CD4-positive, alpha-beta memory T cell (primary cell): ENCODE measurements at regions of chr19 and their contacts with region 1.

Region 1: DNA sequence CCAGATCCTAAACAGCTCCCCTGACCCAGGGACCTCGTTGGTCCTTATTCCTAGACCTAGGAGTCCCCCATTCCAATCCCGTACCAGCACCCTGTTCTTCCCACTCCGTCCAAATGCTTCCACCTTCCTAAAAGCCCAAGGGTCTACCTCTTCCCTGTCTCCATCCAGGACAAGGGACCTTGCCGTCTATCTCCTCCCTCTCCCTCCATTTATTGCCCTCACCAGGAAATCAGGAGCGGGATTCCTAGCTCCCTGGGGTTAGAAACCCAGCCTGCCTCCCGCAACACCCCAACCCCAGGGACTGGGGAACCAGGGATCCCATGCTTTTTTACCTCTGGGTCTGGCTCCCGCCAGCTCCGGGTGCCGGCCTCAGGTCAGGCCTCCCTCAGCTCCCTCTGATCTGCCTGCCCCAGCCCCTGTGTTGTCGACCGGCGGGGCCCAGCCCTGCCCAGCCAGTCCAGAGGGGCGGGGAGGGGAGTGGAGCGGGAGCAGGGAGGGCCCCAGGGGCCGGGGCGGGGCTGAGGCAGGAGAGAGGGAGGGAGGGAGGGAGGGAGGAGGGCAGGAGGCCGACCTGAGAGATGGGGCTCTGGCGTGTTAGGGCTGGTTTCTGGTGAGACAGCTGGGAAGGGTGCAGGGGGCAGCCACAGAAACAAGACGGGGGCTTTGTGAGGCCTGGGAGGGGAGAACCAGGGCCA is at the start of gene B3GNT8:
- DNase-seq: peak; percentile 16 to 52 (median 32)
- H3K4me3 ChIP-seq: peak within 1 kb of the TSS; percentile 33 to 34
- H3K4me3 Mint-ChIP-seq: peak within 1 kb of the TSS; percentile 90 to 98 (median 92)
- H3K27ac ChIP-seq: peak within 1 kb of the TSS; percentile 68
- H3K27ac Mint-ChIP-seq: peak within 1 kb of the TSS; percentile 91 to 98 (median 96)
- H3K4me1 ChIP-seq: peaks cover 39% of the 10 kb centered on the region
- H3K4me1 Mint-ChIP-seq: peaks cover 15 to 51% (median 34%) of the 10 kb centered on the region in 4 donors
- H3K27me3 ChIP-seq: no peaks in the 10 kb centered on the region
- H3K27me3 Mint-ChIP-seq: no peaks in the 10 kb centered on the region
- total RNA-seq, gene B3GNT8: 2.9 to 3.2 TPM

Region 2: DNA sequence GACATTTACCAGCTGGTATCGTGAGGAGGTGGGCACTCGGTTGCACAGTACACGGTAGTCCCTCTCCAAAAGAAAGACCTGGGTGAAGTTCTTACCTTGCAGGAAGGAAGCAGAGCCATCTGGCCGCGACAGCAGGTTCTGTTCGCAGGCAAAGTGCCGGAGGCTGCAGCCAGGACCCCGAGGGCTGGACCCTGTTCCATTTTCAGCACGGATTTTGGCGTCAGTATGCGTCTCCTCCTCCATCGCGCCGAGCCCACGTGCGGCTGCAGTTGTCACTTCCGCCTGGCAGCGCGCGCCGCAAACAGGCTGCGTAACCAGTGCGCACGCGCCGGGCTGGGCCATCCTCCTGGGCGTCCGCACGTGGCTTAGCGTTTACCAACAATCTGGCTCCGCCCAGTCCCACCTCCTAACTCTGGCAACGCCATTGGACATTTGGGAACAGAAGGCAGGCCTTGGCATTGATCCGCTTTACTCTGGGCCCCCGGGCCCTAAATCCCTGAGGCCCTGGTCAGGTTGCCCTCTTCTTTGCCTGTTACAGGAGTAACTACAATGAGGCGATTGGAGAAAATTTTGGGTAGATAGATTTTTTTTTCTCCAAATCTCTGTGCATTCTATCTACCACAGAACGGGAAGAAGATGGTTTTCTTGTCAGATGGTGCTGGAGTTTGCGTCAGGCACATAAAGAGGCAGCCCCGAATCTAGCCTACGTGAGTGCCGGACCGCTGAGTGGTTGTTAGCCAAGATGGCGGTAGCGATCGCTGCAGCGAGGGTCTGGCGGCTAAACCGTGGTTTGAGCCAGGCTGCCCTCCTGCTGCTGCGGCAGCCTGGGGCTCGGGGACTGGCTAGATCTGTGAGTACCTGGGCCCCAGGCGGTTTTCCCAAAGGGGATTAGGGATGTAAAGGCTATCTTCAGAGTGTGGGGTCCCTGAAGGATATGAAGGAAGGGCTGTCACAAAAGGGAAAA is 29.7 kb before region 1 on chr19 and contains the starts of genes BCKDHA and EXOSC5:
- CTCF ChIA-PET with region 1: interaction called, 3 read pairs
- POLR2A ChIA-PET with region 1: no interaction called
- intact Hi-C with region 1: loop called (anchors 1 kb)
- DNase-seq: peak; percentile 98 to 100 (median 100)
- H3K4me3 ChIP-seq: peak within 1 kb of the TSS; percentile 94 to 96
- H3K4me3 Mint-ChIP-seq: peak within 1 kb of the TSS; percentile 94 to 100 (median 98)
- H3K27ac ChIP-seq: peak within 1 kb of the TSS; percentile 93
- H3K27ac Mint-ChIP-seq: peak within 1 kb of the TSS; percentile 98 to 100 (median 100)
- H3K4me1 ChIP-seq: peaks cover 31% of the 10 kb centered on the region
- H3K4me1 Mint-ChIP-seq: peaks cover 27 to 54% (median 41%) of the 10 kb centered on the region in 4 donors
- H3K27me3 ChIP-seq: no peaks in the 10 kb centered on the region
- H3K27me3 Mint-ChIP-seq: no peaks in the 10 kb centered on the region
- total RNA-seq, gene BCKDHA: 23.6 to 27.1 TPM
- total RNA-seq, gene EXOSC5: 18.2 to 23.0 TPM

Region 3: GRCh38 chr19:41479757-41480191 is 52.7 kb after region 1 on chr19:
- CTCF ChIA-PET with region 1: no interaction called
- POLR2A ChIA-PET with region 1: no interaction called
- intact Hi-C with region 1: no loop called
- DNase-seq: no peak
- H3K4me3 ChIP-seq: no peak overlapping the region
- H3K4me3 Mint-ChIP-seq: no peak overlapping the region
- H3K27ac ChIP-seq: no peak overlapping the region
- H3K27ac Mint-ChIP-seq: no peak overlapping the region
- H3K4me1 ChIP-seq: no peaks in the 10 kb centered on the region
- H3K4me1 Mint-ChIP-seq: no peaks in the 10 kb centered on the region
- H3K27me3 ChIP-seq: no peaks in the 10 kb centered on the region
- H3K27me3 Mint-ChIP-seq: peaks cover 30 to 36% of the 10 kb centered on the region in 2 donors